H1 (cell line): ENCODE measurements at regions of chr11 and their contacts with region 1.

Region 1: DNA sequence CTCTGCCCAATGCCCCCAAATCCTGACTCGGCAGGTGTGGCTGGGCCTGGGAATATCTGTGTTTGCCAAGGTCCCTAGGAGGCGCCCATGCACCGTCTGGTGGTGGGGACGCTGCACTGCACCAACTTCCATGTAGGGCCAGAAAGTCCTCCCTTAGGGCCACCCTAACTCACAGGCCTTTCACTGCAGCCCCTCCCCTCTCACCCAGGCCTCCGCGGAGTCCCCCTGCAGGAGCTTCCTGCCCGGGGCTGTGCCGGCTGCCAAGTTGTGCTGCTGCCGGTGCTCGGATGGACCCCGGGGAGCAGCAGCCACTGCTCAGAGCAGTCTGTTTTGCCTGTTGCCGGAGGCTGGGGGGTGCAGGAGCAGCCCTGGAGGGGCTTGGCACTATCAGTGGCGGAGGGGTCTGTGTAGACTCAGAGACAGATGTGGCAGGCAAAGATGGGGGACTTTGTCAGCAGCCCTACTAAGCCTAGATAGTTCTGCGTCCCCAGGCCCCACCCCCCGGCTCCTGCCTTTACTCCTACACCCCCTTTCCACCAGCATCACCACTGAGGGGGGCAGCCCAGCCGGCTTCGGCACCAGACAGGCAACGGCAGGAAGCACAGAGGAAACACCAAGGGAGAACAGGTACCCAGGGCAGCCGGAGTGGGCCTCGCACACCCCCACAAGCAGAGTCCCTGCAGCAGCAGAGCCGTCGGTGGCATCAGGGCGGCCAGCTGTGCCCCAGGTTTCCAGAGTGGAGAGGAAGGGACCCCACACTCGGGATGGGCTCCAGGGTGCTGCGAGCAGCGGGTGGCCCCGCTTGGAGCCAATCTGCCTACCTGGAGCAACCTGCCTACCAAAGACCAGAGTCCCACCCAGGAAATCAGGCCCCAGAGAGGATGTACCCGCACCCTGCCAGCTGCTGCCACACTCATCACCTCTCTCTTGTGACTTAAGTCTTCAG is 124.3 kb downstream of the TRIM29 start:
- DNase-seq: peak; percentile 81 to 89
- H3K4me3 ChIP-seq: peak overlapping the region in 1 of 4 experiments; percentile 34; a peak in 2 of 8 replicates
- H3K27ac ChIP-seq: no peak overlapping the region
- H3K4me1 ChIP-seq: peaks cover 8 to 24% (median 14%) of the 10 kb centered on the region in 4 experiments
- H3K27me3 ChIP-seq: peaks cover 0 to 5% (median under 1%) of the 10 kb centered on the region in 4 experiments; a peak in 3 of 7 replicates
- CTCF ChIP-seq: peak; percentile 92 to 96 (median 93)
- EP300 ChIP-seq: peak in 1 of 2 experiments; percentile 40; a peak in 1 of 3 replicates
- POLR2A ChIP-seq: no peak
- RAD21 ChIP-seq: peak; percentile 89 to 94

Region 2: DNA sequence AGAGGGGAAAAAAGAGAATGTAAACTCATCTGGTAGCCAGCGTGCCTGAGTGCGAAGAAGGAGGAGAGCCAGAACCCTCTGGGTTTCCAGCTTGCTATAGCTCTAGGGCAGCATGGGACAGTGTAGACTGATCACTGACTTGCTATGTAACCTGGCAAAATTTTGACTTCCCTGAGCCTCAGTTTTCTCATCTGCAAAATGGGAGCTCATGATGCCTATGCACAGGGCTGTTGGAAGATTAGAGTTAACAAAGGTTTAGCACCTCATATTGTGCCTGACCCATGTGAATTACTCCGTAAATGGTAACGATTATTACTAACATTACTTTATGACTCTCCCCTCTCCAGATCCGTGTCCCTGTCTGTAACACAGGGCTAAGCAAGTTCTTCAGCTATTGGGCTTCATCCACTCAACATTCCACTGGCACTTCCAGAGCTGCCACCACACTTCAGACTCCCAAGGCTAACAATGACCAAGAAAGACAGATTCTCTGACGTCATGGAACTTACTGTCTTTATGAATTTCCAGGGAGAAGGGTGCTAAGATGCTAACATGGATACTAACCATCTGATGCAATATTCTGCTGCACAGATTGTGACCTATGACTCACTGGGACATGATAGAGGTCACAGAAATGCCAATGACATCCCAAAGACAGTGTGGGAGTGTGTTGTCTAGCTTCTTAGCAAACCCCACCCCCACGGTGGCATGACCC is 70.9 kb before region 1 on chr11:
- CTCF ChIA-PET with region 1: interaction called, 10 read pairs
- POLR2A ChIA-PET with region 1: no interaction called
- DNase-seq: no peak
- H3K4me3 ChIP-seq: no peak overlapping the region
- H3K27ac ChIP-seq: no peak overlapping the region
- H3K4me1 ChIP-seq: peaks cover 2 to 6% (median 3%) of the 10 kb centered on the region in 4 experiments; a peak in 4 of 7 replicates
- H3K27me3 ChIP-seq: no peaks in the 10 kb centered on the region; a peak in 1 of 7 replicates
- CTCF ChIP-seq: no peak
- EP300 ChIP-seq: no peak
- POLR2A ChIP-seq: no peak
- RAD21 ChIP-seq: no peak

Region 3: GRCh38 chr11:119975561-119976152 is 37.9 kb before region 1 on chr11:
- CTCF ChIA-PET with region 1: interaction called, 15 read pairs
- POLR2A ChIA-PET with region 1: no interaction called
- DNase-seq: peak; percentile 39 to 70
- H3K4me3 ChIP-seq: no peak overlapping the region
- H3K27ac ChIP-seq: no peak overlapping the region; the same call in 1 of the 2 replicates
- H3K4me1 ChIP-seq: peaks cover 2 to 15% (median 9%) of the 10 kb centered on the region in 4 experiments; a peak in 5 of 7 replicates
- H3K27me3 ChIP-seq: no peaks in the 10 kb centered on the region; a peak in 2 of 7 replicates
- CTCF ChIP-seq: no peak
- EP300 ChIP-seq: no peak
- POLR2A ChIP-seq: no peak
- RAD21 ChIP-seq: 0 out of 4 replicates have a peak, but pooled peaks have one; percentile 1 to 4

Region 4: DNA sequence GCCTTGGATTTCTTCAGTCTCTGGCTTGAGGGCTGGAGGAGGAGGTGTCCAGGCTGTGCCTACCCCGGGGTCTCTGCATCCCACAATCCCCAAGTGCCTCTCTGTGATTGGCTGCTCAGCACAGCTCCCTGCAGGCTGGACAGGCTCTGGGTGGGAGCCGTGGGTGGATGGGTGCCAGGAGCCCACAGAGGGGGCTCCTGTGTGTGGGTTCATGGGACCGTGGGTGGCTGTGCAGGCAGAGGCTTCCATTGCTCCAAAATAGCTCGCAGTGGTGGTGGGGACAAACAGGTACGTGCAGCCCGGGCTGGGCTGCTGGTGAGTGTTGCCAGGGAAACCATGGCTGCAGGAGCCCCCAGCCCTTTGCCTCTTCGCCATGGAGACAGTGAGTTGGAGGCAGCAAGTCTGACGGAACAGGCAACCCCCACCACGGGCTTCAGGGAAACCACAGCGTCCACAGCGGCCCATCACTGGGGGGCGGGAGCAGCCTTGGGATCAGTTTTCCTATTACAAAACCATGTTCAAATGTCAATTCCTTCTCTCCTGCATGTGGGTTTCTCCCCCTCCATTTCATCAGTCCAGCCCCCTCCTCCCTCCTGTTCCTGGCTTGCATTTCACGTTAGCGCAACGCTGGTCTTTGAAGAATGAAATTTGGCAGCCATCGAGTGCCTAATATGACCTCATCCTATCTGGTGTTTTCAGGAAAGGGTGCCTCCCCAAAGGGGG is 30.9 kb before region 1 on chr11:
- CTCF ChIA-PET with region 1: interaction called, 15 read pairs
- POLR2A ChIA-PET with region 1: no interaction called
- DNase-seq: no peak
- H3K4me3 ChIP-seq: no peak overlapping the region
- H3K27ac ChIP-seq: no peak overlapping the region
- H3K4me1 ChIP-seq: 0 out of 7 replicates have a peak, but pooled peaks cover 0 to 2% (median 0%) of the 10 kb centered on the region in 4 experiments
- H3K27me3 ChIP-seq: no peaks in the 10 kb centered on the region; a peak in 1 of 7 replicates
- CTCF ChIP-seq: no peak
- EP300 ChIP-seq: no peak
- POLR2A ChIP-seq: no peak
- RAD21 ChIP-seq: no peak

Region 5: DNA sequence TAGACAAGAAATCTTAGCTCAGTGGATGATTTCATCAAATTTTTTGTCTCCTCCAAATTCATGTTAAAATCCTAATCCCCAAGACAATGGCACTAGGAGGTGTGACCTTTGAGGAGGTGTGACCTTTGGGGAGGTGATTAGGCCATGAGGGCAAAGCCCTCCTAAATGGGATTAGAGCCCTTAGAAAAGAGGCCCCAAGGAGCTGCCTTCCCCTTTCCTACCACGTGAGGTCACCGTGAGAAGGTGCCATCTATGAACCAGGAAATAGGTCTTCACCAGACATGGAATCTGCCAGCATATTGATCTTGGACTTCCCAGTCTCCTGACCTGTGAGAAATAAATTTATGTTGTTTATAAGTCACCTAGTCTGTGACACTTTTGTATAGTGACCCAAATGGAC is 14.4 kb before region 1 on chr11:
- CTCF ChIA-PET with region 1: interaction called, 90 read pairs
- POLR2A ChIA-PET with region 1: interaction called, 3 read pairs
- DNase-seq: no peak
- H3K4me3 ChIP-seq: no peak overlapping the region
- H3K27ac ChIP-seq: no peak overlapping the region
- H3K4me1 ChIP-seq: peaks cover 0 to 11% (median 7%) of the 10 kb centered on the region in 4 experiments; a peak in 4 of 7 replicates
- H3K27me3 ChIP-seq: no peaks in the 10 kb centered on the region
- CTCF ChIP-seq: peak; percentile 43 to 57 (median 55)
- EP300 ChIP-seq: no peak
- POLR2A ChIP-seq: no peak
- RAD21 ChIP-seq: peak; percentile 69 to 78

Region 6: GRCh38 chr11:120079750-120080490 is 66.3 kb after region 1 on chr11:
- CTCF ChIA-PET with region 1: interaction called, 26 read pairs
- POLR2A ChIA-PET with region 1: no interaction called
- DNase-seq: peak in 1 of 2 experiments; percentile 82
- H3K4me3 ChIP-seq: no peak overlapping the region
- H3K27ac ChIP-seq: no peak overlapping the region
- H3K4me1 ChIP-seq: no peaks in the 10 kb centered on the region
- H3K27me3 ChIP-seq: no peaks in the 10 kb centered on the region; a peak in 2 of 7 replicates
- CTCF ChIP-seq: peak; percentile 74 to 82 (median 76)
- EP300 ChIP-seq: no peak
- POLR2A ChIP-seq: no peak
- RAD21 ChIP-seq: peak; percentile 55 to 72

Region 7: GRCh38 chr11:120128782-120129172 is 115.2 kb after region 1 on chr11:
- CTCF ChIA-PET with region 1: no interaction called
- POLR2A ChIA-PET with region 1: no interaction called
- DNase-seq: no peak
- H3K4me3 ChIP-seq: no peak overlapping the region
- H3K27ac ChIP-seq: no peak overlapping the region
- H3K4me1 ChIP-seq: no peaks in the 10 kb centered on the region
- H3K27me3 ChIP-seq: peaks cover 0 to 3% (median 1%) of the 10 kb centered on the region in 4 experiments; a peak in 3 of 7 replicates
- CTCF ChIP-seq: no peak
- EP300 ChIP-seq: no peak
- POLR2A ChIP-seq: no peak
- RAD21 ChIP-seq: no peak